ENCODE measurements at regions of chr16 and their contacts with region 1.

Region 1: GRCh38 chr16:31094424-31095120 is at the start of gene VKORC1:
- DNase-seq: peak; percentile 90
- ATAC-seq: peak; percentile 89
- H3K4me3 ChIP-seq: peak within 1 kb of the TSS; percentile 50 to 99 (median 73)
- H3K4me3 Mint-ChIP-seq: peak within 1 kb of the TSS; percentile 98
- H3K27ac ChIP-seq: peak within 1 kb of the TSS; percentile 81 to 85
- H3K27ac Mint-ChIP-seq: peak within 1 kb of the TSS; percentile 96
- H3K4me1 ChIP-seq: peaks cover 14 to 31% of the 10 kb centered on the region in 2 donors
- H3K4me1 Mint-ChIP-seq: peaks cover 29% of the 10 kb centered on the region
- H3K27me3 ChIP-seq: no peaks in the 10 kb centered on the region
- H3K27me3 Mint-ChIP-seq: no peaks in the 10 kb centered on the region
- CTCF ChIP-seq: no peak
- total RNA-seq, gene VKORC1: 36.8 and 45.7 TPM in 2 replicates

Region 2: GRCh38 chr16:30997000-30997886 is 97.3 kb before region 1 on chr16:
- CTCF ChIA-PET with region 1: no interaction called
- POLR2A ChIA-PET with region 1: no interaction called
- intact Hi-C with region 1: loop called (anchors 1 kb)
- DNase-seq: peak; percentile 88
- ATAC-seq: peak; percentile 100
- H3K4me3 ChIP-seq: peak overlapping the region in 4 of 5 experiments; percentile 54 to 72 (median 66)
- H3K4me3 Mint-ChIP-seq: peak overlapping the region; percentile 91
- H3K27ac ChIP-seq: peak overlapping the region; percentile 29 to 62
- H3K27ac Mint-ChIP-seq: peak overlapping the region; percentile 92
- H3K4me1 ChIP-seq: peaks cover 9 to 13% of the 10 kb centered on the region in 2 donors
- H3K4me1 Mint-ChIP-seq: peaks cover 9% of the 10 kb centered on the region
- H3K27me3 ChIP-seq: peaks cover 0 to 7% (median 0%) of the 10 kb centered on the region in 4 experiments
- H3K27me3 Mint-ChIP-seq: no peaks in the 10 kb centered on the region
- CTCF ChIP-seq: no peak

Region 3: DNA sequence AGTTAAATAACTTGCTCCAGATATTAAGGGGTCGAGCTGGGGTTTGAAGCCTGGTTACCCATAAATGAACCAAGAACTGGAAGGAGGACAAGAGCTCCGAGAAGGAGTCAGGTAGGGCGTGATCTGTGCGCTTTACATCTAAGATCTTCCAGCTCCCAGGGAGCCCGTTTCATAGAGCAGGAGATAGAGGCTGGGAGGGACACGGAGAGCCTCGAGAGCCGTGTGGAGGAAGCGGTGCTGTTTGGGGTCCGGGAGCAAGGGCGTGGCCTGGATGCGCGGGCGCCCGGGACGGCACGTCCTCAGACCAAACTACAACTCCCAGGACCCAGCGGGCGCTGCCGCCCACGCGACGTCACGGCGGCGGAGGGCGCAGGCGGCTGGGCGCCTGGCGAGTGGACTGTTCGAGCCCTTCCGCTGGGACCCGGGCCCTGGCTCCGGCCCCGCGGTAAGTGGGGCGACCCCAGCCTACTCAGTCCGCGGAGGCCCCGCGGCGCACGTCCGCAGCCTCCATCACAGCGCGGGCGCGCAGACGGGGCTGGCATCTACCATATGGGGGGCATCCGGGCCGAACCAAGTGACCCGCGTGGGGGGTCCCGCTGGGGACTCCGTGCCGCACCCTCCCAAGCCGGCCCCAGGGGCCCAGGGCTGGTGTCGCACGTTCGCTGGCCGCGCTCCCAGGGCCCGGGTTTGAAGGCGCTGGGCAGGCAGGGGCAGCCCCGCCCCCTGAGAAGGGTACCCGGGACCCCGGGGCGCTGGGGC is 13.6 kb after region 1 on chr16 and contains the start of gene BCKDK:
- CTCF ChIA-PET with region 1: interaction called, 3 read pairs
- POLR2A ChIA-PET with region 1: interaction called, 3 read pairs
- intact Hi-C with region 1: loop called (anchors 2 kb)
- DNase-seq: peak; percentile 74
- ATAC-seq: peak; percentile 77
- H3K4me3 ChIP-seq: peak within 1 kb of the TSS; percentile 41 to 82 (median 78)
- H3K4me3 Mint-ChIP-seq: peak within 1 kb of the TSS; percentile 91
- H3K27ac ChIP-seq: peak within 1 kb of the TSS in 1 of 2 donors; percentile 72
- H3K27ac Mint-ChIP-seq: peak within 1 kb of the TSS; percentile 82
- H3K4me1 ChIP-seq: peaks cover 7 to 18% of the 10 kb centered on the region in 2 donors
- H3K4me1 Mint-ChIP-seq: peaks cover 21% of the 10 kb centered on the region
- H3K27me3 ChIP-seq: no peaks in the 10 kb centered on the region
- H3K27me3 Mint-ChIP-seq: no peaks in the 10 kb centered on the region
- CTCF ChIP-seq: no peak
- total RNA-seq, gene BCKDK: 24.7 and 29.7 TPM in 2 replicates

Region 4: DNA sequence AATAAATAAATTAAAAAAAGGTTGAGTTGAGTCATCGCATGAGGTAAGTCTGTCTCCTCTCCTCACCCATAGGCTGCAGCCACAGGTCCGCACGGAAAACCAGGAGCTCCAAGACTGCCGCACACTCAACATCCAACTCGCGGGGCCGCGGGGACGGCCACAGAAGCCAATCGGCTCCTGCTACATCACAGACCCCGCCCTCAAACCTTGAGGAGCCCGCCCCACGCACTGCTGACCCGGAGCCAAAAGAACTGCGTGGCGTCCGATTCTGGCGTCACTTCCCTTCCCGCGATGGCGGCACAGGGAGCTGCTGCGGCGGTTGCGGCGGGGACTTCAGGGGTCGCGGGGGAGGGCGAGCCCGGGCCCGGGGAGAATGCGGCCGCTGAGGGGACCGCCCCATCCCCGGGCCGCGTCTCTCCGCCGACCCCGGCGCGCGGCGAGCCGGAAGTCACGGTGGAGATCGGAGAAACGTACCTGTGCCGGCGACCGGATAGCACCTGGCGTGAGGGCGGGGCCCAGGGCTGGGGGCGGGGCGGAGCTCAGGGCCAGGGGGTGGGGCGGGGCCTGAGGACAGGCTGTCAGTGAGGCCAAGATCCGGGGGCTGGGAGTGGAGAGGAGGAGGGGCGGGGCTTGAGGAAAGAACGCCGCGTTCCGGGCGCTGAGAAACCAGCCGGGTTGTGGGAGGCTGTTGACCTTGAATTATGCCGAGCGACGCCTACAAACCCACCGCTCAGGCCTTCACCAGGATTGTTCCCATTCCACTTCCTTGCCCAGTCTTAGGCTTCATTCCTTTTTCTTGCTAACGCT is 23.0 kb after region 1 on chr16 and contains the start of gene KAT8:
- CTCF ChIA-PET with region 1: no interaction called
- POLR2A ChIA-PET with region 1: no interaction called
- intact Hi-C with region 1: loop called (anchors 1 kb)
- DNase-seq: peak; percentile 98
- ATAC-seq: peak; percentile 94
- H3K4me3 ChIP-seq: peak within 1 kb of the TSS; percentile 49 to 83 (median 66)
- H3K4me3 Mint-ChIP-seq: peak within 1 kb of the TSS; percentile 92
- H3K27ac ChIP-seq: peak within 1 kb of the TSS; percentile 72 to 95
- H3K27ac Mint-ChIP-seq: peak within 1 kb of the TSS; percentile 96
- H3K4me1 ChIP-seq: peaks cover 10 to 20% of the 10 kb centered on the region in 2 donors
- H3K4me1 Mint-ChIP-seq: peaks cover 15% of the 10 kb centered on the region
- H3K27me3 ChIP-seq: no peaks in the 10 kb centered on the region
- H3K27me3 Mint-ChIP-seq: no peaks in the 10 kb centered on the region
- CTCF ChIP-seq: no peak
- total RNA-seq, gene KAT8: 100.0 and 102 TPM in 2 replicates

Measured in B cell (primary cell).